Naive thymus-derived CD4-positive, alpha-beta T cell (primary cell): ENCODE measurements at regions of chr20 and their contacts with region 1.

Region 1: GRCh38 chr20:2523919-2524708 is 12.3 kb upstream of the TMC2 start:
- DNase-seq: peak; percentile 82 to 97 (median 91)
- ATAC-seq: peak; percentile 96
- H3K4me3 ChIP-seq: peak overlapping the region; percentile 92
- H3K4me3 Mint-ChIP-seq: peak overlapping the region; percentile 80 to 94 (median 90)
- H3K27ac ChIP-seq: peak overlapping the region; percentile 76
- H3K27ac Mint-ChIP-seq: peak overlapping the region; percentile 62 to 94 (median 86)
- H3K4me1 ChIP-seq: peaks cover 0 to 5% of the 10 kb centered on the region in 2 donors
- H3K4me1 Mint-ChIP-seq: peaks cover 6 to 24% (median 10%) of the 10 kb centered on the region in 7 donors
- H3K27me3 ChIP-seq: no peaks in the 10 kb centered on the region
- H3K27me3 Mint-ChIP-seq: peaks cover 0 to 4% (median 0%) of the 10 kb centered on the region in 5 donors

Region 2: GRCh38 chr20:2421247-2421646 is 102.9 kb before region 1 on chr20:
- CTCF ChIA-PET with region 1: no interaction called
- POLR2A ChIA-PET with region 1: no interaction called
- intact Hi-C with region 1: no loop called
- DNase-seq: no peak
- ATAC-seq: no peak
- H3K4me3 ChIP-seq: no peak overlapping the region
- H3K4me3 Mint-ChIP-seq: no peak overlapping the region
- H3K27ac ChIP-seq: no peak overlapping the region
- H3K27ac Mint-ChIP-seq: no peak overlapping the region
- H3K4me1 ChIP-seq: no peaks in the 10 kb centered on the region
- H3K4me1 Mint-ChIP-seq: no peaks in the 10 kb centered on the region
- H3K27me3 ChIP-seq: no peaks in the 10 kb centered on the region
- H3K27me3 Mint-ChIP-seq: peaks cover 0 to 21% (median 12%) of the 10 kb centered on the region in 5 donors

Region 3: GRCh38 chr20:2508631-2509467 is 15.3 kb before region 1 on chr20 and contains the start of gene ZNF343:
- CTCF ChIA-PET with region 1: interaction called, 51 read pairs
- POLR2A ChIA-PET with region 1: interaction called, 35 read pairs
- intact Hi-C with region 1: loop called (anchors 1 kb)
- DNase-seq: peak; percentile 61 to 84 (median 82)
- ATAC-seq: peak; percentile 97
- H3K4me3 ChIP-seq: peak within 1 kb of the TSS; percentile 97
- H3K4me3 Mint-ChIP-seq: peak within 1 kb of the TSS; percentile 92 to 100 (median 98)
- H3K27ac ChIP-seq: peak within 1 kb of the TSS; percentile 84
- H3K27ac Mint-ChIP-seq: peak within 1 kb of the TSS; percentile 90 to 99 (median 98)
- H3K4me1 ChIP-seq: peaks cover 6 to 7% of the 10 kb centered on the region in 2 donors
- H3K4me1 Mint-ChIP-seq: peaks cover 11 to 30% (median 25%) of the 10 kb centered on the region in 7 donors
- H3K27me3 ChIP-seq: no peaks in the 10 kb centered on the region
- H3K27me3 Mint-ChIP-seq: peaks cover 8 to 28% (median 12%) of the 10 kb centered on the region in 5 donors
- total RNA-seq, gene ZNF343: 7.5 to 14.4 (median 11.8) TPM

Region 4: DNA sequence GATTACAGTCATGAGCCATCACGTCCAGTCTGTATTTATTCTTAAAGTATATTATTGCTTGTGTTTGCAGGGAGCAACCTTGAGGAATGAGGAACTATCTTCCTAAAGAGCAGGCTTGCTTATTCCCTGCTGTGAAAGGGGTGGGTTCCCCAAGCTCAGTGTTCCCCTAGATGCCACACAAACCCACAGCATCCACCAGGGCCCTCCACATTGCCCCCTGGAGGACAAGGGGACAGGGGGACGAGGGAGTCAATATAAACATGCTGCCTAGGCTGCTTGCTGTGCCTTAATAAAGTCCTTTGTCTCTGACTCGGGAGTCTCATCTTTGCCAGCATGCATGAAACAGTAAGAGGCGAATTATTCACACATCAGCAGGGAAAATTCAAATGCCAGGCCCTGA is 147.9 kb after region 1 on chr20:
- CTCF ChIA-PET with region 1: interaction called, 7 read pairs
- POLR2A ChIA-PET with region 1: interaction called, 3 read pairs
- intact Hi-C with region 1: loop called in 1 of 2 experiments (anchors 1 kb)
- DNase-seq: no peak
- ATAC-seq: no peak
- H3K4me3 ChIP-seq: no peak overlapping the region
- H3K4me3 Mint-ChIP-seq: no peak overlapping the region
- H3K27ac ChIP-seq: no peak overlapping the region
- H3K27ac Mint-ChIP-seq: no peak overlapping the region
- H3K4me1 ChIP-seq: no peaks in the 10 kb centered on the region
- H3K4me1 Mint-ChIP-seq: no peaks in the 10 kb centered on the region
- H3K27me3 ChIP-seq: no peaks in the 10 kb centered on the region
- H3K27me3 Mint-ChIP-seq: peaks cover 0 to 10% (median 0%) of the 10 kb centered on the region in 5 donors